Activated T-helper 1 cell treated with anti-CD3 and anti-CD28 coated beads, Interleukin-12 subunit alpha, Interleukin-12 subunit beta, Interleukin-2, Interleukin-4 antibody, amounts not matched to agents 30 ng/mL and 10 ng/mL and 1 ng/mL, durations not matched to agents 14 hours and 24 hours and 36 hours (primary cell): ENCODE measurements at regions of chr7 and their contacts with region 1.

Region 1: GRCh38 chr7:157301610-157302120 is 35.1 kb upstream of the DNAJB6 start:
- DNase-seq: no peak
- H3K4me3 Mint-ChIP-seq: peak overlapping the region; percentile 32
- H3K27ac Mint-ChIP-seq: peak overlapping the region; percentile 98
- H3K4me1 Mint-ChIP-seq: peaks cover 44% of the 10 kb centered on the region
- H3K27me3 Mint-ChIP-seq: no peaks in the 10 kb centered on the region

Region 2: GRCh38 chr7:157273208-157274093 is 28.2 kb before region 1 on chr7:
- intact Hi-C with region 1: loop called (anchors 2 kb)
- DNase-seq: peak; percentile 36
- H3K4me3 Mint-ChIP-seq: no peak overlapping the region
- H3K27ac Mint-ChIP-seq: no peak overlapping the region
- H3K4me1 Mint-ChIP-seq: peaks cover 18% of the 10 kb centered on the region
- H3K27me3 Mint-ChIP-seq: peaks cover 2% of the 10 kb centered on the region

Region 3: GRCh38 chr7:157318012-157318709 is 16.5 kb after region 1 on chr7:
- intact Hi-C with region 1: loop called (anchors 2 kb)
- DNase-seq: no peak
- H3K4me3 Mint-ChIP-seq: no peak overlapping the region
- H3K27ac Mint-ChIP-seq: peak overlapping the region; percentile 67
- H3K4me1 Mint-ChIP-seq: peaks cover 10% of the 10 kb centered on the region
- H3K27me3 Mint-ChIP-seq: no peaks in the 10 kb centered on the region

Region 4: GRCh38 chr7:157386979-157387800 is 85.5 kb after region 1 on chr7:
- intact Hi-C with region 1: loop called (anchors 1 kb)
- DNase-seq: peak; percentile 78
- H3K4me3 Mint-ChIP-seq: no peak overlapping the region
- H3K27ac Mint-ChIP-seq: peak overlapping the region; percentile 57
- H3K4me1 Mint-ChIP-seq: peaks cover 38% of the 10 kb centered on the region
- H3K27me3 Mint-ChIP-seq: no peaks in the 10 kb centered on the region

Region 5: DNA sequence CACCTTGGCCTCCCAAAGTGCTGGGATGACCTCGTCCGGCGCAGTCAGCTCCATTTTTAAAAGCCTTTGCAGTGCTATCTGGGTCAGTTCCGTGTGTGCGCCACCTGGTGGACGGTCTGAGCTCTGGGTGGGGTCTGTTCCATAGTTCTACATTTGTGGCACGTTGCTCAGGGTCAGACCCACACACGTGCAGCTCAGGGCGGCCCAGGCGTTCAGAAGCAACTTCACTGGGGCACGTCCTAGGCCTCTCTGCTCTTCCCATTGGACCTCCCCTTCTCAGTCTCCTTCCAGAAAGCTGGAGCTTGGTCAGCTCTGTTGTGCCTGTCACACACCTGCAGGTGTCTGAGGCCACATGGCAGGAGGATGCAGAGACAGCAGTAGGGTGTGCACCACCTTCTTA is 173.0 kb after region 1 on chr7:
- intact Hi-C with region 1: no loop called
- DNase-seq: no peak
- H3K4me3 Mint-ChIP-seq: no peak overlapping the region
- H3K27ac Mint-ChIP-seq: no peak overlapping the region
- H3K4me1 Mint-ChIP-seq: peaks cover 52% of the 10 kb centered on the region
- H3K27me3 Mint-ChIP-seq: no peaks in the 10 kb centered on the region